K562 (cell line): ENCODE measurements at regions of chr11 and their contacts with region 1.

Region 1: GRCh38 chr11:6022956-6023355 is 7.6 kb downstream of the OR56A1 start:
- DNase-seq: peak; percentile 10 to 35 (median 12)
- ATAC-seq: peak; percentile 67; the same call in 2 of the 3 replicates
- H3K4me3 ChIP-seq: no peak overlapping the region
- H3K27ac ChIP-seq: no peak overlapping the region
- H3K4me1 ChIP-seq: no peaks in the 10 kb centered on the region
- H3K27me3 ChIP-seq: no peaks in the 10 kb centered on the region
- CTCF ChIP-seq: peak; percentile 53 to 72 (median 54); a peak in 5 of 6 replicates
- EP300 ChIP-seq: no peak
- POLR2A ChIP-seq: no peak
- RAD21 ChIP-seq: peak; percentile 79 to 89

Region 2: DNA sequence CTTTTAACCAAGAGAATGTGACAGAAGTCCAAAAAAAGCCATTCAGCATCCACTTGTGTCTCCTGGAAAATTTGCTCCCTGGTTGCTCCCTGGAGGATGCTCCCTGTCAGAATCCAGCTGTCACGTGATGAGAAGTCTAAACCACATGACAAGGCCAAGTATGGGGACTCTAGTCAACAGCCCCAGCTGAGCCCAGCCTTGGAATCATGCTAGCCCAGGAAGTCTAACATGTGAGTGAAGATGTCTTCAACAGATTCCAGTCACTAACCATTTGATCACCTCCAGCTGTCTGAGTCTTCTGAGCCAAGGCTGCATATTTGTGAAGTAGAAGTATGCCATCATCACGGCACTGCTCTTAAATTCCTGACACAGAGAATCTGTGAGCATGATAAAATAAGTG is 88.7 kb after region 1 on chr11:
- CTCF ChIA-PET with region 1: no interaction called
- POLR2A ChIA-PET with region 1: no interaction called
- in situ Hi-C with region 1: no loop called
- intact Hi-C with region 1: no loop called
- DNase-seq: no peak
- ATAC-seq: no peak
- H3K4me3 ChIP-seq: no peak overlapping the region
- H3K27ac ChIP-seq: no peak overlapping the region
- H3K4me1 ChIP-seq: no peaks in the 10 kb centered on the region
- H3K27me3 ChIP-seq: 0 out of 5 replicates have a peak, but pooled peaks cover 0 to 5% of the 10 kb centered on the region in 2 experiments
- CTCF ChIP-seq: no peak
- EP300 ChIP-seq: no peak
- POLR2A ChIP-seq: no peak
- RAD21 ChIP-seq: no peak

Region 3: DNA sequence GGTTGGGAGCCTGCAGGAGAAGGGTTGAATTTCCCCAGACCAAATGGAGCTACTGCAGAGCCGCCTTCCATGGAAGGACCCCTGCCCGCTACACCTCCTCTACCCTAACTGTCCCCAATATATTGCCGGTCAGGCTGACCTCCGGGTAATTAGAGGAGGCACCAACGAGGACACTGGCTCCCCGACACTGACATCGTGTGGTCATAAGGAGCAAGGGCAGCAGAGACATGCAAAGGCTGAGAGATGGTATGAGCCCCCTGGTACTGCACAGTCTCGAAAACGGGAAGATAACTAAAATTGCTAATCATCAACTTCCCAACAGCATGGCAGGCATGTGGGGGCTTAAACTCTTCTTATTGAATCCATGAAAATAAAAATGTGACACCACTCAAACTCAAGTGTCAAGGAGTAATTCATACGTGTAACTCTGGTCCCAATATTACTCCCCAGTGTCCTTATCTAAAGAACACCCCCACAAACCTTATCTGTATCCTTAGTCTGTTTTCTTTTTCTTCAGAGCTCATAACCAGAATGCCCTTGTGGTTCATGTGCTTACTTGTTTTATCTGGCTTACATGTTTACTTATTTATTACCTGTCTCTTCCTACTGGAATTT is 293.0 kb after region 1 on chr11:
- CTCF ChIA-PET with region 1: interaction called, 5 read pairs
- POLR2A ChIA-PET with region 1: no interaction called
- in situ Hi-C with region 1: no loop called
- intact Hi-C with region 1: loop called (anchors 2 kb)
- DNase-seq: peak; percentile 66 to 79 (median 70)
- ATAC-seq: peak; percentile 98
- H3K4me3 ChIP-seq: no peak overlapping the region
- H3K27ac ChIP-seq: no peak overlapping the region
- H3K4me1 ChIP-seq: peaks cover 3 to 19% of the 10 kb centered on the region in 2 experiments; a peak in 4 of 5 replicates
- H3K27me3 ChIP-seq: peaks cover 21 to 39% of the 10 kb centered on the region in 2 experiments; a peak in 3 of 5 replicates
- CTCF ChIP-seq: peak; percentile 80 to 89 (median 88)
- EP300 ChIP-seq: no peak
- POLR2A ChIP-seq: no peak
- RAD21 ChIP-seq: peak; percentile 68 to 87

Region 4: DNA sequence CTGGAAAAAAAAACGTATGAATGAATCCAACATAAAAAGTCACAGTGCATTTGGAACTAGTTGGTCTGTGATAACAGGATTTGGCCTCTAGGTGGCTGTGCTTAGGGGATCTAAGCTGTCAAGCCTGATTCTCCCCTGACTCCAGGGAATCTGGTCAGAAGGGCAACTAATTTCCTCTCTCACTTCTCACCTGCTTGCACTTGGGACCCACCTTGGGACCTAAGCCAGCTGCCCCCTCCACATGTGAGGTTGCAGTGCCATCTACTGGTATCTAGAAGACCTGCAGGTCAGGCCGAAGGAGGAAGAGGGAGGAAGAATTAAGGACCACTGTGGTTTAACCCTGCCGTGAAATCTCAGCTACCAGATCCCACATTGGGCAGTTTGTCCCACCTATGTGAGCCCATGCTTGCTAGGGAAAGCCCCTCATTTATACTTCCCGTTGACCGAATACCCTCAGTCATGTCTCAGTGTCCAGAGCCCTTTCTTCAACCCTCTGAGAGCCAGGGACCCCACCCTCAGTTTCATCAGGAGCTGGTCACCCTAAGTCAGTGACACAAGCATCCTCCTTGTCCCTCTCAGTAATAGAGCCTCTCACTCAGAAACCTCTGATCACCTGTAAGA is 330.5 kb after region 1 on chr11:
- CTCF ChIA-PET with region 1: interaction called, 11 read pairs
- POLR2A ChIA-PET with region 1: no interaction called
- in situ Hi-C with region 1: loop called (anchors 5 kb)
- intact Hi-C with region 1: loop called (anchors 2 kb)
- DNase-seq: peak; percentile 61 to 71 (median 63)
- ATAC-seq: peak; percentile 89
- H3K4me3 ChIP-seq: no peak overlapping the region
- H3K27ac ChIP-seq: no peak overlapping the region
- H3K4me1 ChIP-seq: peaks cover 0 to 5% of the 10 kb centered on the region in 2 experiments; a peak in 2 of 5 replicates
- H3K27me3 ChIP-seq: peaks cover 0 to 9% of the 10 kb centered on the region in 2 experiments; a peak in 4 of 5 replicates
- CTCF ChIP-seq: peak; percentile 93 to 97 (median 94)
- EP300 ChIP-seq: no peak
- POLR2A ChIP-seq: no peak
- RAD21 ChIP-seq: peak; percentile 82 to 92